ENCODE measurements at regions of chr2 and their contacts with region 1.

Region 1: GRCh38 chr2:168490015-168490874 is 34.2 kb downstream of the CERS6 start:
- DNase-seq: peak; percentile 57 to 78 (median 77)
- H3K4me3 ChIP-seq: peak overlapping the region; percentile 26 to 90 (median 73)
- H3K4me3 Mint-ChIP-seq: peak overlapping the region; percentile 78 to 90
- H3K27ac ChIP-seq: peak overlapping the region; percentile 78 to 83
- H3K27ac Mint-ChIP-seq: peak overlapping the region; percentile 89 to 95 (median 93)
- H3K4me1 ChIP-seq: peaks cover 19 to 30% of the 10 kb centered on the region in 2 donors
- H3K4me1 Mint-ChIP-seq: peaks cover 48% of the 10 kb centered on the region
- H3K27me3 ChIP-seq: no peaks in the 10 kb centered on the region
- H3K27me3 Mint-ChIP-seq: peaks cover 0 to 1% (median 0%) of the 10 kb centered on the region in 3 donors
- CTCF ChIP-seq: no peak

Region 2: DNA sequence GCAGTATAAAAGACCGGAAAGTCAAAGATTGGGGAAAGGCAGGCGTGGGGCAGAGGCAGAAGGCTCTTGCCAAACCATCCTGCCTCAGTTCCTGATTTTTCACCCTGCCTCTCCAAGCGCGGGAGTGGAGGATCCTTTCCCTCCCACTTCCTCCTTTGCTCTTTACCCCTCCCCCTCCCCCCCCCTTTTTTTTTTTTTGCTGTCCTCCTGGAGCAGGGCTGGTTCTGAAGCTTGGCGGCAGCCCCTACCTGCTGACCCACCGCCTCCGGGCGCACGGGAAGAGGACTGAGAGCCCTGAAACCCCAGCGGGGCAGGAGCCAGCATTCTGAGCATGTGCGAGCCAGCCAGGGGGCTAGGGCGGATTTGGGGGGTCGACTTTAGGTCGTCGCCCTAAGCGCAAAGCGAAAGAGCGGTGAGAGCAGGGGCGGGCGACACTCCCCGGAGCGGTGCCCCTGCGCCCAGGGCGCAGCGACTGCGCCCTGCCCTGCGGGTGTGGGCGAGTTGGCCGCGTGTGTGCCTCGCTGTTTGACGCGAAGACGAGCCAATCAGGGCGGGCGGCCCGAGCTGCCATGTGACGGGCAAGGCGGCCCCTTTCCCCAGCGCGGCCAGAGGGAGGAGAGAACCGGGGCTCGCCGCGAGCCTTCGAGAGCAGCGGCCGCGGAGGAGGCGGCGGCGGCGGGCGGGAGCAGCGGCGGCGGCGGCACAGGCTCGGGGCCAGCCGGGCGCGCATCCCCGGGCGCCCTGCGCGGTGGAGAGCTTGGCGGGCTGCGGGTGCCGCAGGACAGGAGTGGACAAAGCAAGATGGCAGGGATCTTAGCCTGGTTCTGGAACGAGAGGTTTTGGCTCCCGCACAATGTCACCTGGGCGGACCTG is 34.4 kb before region 1 on chr2 and contains the start of gene CERS6:
- intact Hi-C with region 1: loop called in 1 of 2 experiments (anchors 5 kb)
- DNase-seq: peak; percentile 87 to 90 (median 88)
- H3K4me3 ChIP-seq: peak within 1 kb of the TSS; percentile 84 to 95 (median 93)
- H3K4me3 Mint-ChIP-seq: no peak within 1 kb of the TSS
- H3K27ac ChIP-seq: peak within 1 kb of the TSS; percentile 85 to 87
- H3K27ac Mint-ChIP-seq: peak within 1 kb of the TSS in 6 of 7 donors; percentile 72 to 82 (median 78)
- H3K4me1 ChIP-seq: peaks cover 27 to 36% of the 10 kb centered on the region in 2 donors
- H3K4me1 Mint-ChIP-seq: peaks cover 32% of the 10 kb centered on the region
- H3K27me3 ChIP-seq: no peaks in the 10 kb centered on the region
- H3K27me3 Mint-ChIP-seq: no peaks in the 10 kb centered on the region
- CTCF ChIP-seq: no peak
- polyA plus RNA-seq, gene CERS6: 7.6 to 17.7 (median 15.6) TPM

Region 3: DNA sequence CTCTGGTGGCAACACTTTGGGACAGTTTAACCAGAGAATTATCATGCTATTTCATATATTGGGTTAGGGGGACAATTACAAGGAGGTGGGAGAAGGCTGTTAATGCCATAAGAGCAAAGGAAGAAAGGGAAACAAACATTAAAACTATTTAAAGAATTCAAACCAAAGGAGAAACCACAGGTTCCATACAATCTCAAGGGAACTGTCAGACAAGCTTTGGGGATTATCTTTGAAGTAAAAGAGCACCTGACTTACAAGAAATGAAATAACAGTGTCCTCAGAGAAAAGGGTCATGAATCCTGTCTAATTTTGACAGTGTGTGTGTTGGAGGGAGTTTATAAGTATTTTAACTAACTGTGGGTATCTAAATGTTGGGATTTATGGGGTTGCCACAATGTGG is 10.3 kb after region 1 on chr2:
- intact Hi-C with region 1: no loop called
- DNase-seq: no peak
- H3K4me3 ChIP-seq: no peak overlapping the region
- H3K4me3 Mint-ChIP-seq: no peak overlapping the region
- H3K27ac ChIP-seq: no peak overlapping the region
- H3K27ac Mint-ChIP-seq: no peak overlapping the region
- H3K4me1 ChIP-seq: no peaks in the 10 kb centered on the region
- H3K4me1 Mint-ChIP-seq: peaks cover 19% of the 10 kb centered on the region
- H3K27me3 ChIP-seq: no peaks in the 10 kb centered on the region
- H3K27me3 Mint-ChIP-seq: no peaks in the 10 kb centered on the region
- CTCF ChIP-seq: no peak